Heart left ventricle (tissue), 16 donors: ENCODE measurements at regions of chr7 and their contacts with region 1.

Region 1: GRCh38 chr7:39085590-39086049 is 107.9 kb downstream of the POU6F2 start:
- DNase-seq: peak in 1 of 5 donors; percentile 29
- ATAC-seq: peak; percentile 51 to 92 (median 84)
- H3K4me3 ChIP-seq: peak overlapping the region in 10 of 12 donors; percentile 10 to 49 (median 40)
- H3K27ac ChIP-seq: peak overlapping the region in 4 of 12 donors; percentile 10 to 76 (median 62)
- H3K4me1 ChIP-seq: peaks cover 0 to 9% (median 0%) of the 10 kb centered on the region in 12 donors
- H3K27me3 ChIP-seq: peaks cover 0 to 20% (median 3%) of the 10 kb centered on the region in 9 donors
- CTCF ChIP-seq: no peak
- POLR2A ChIP-seq: no peak

Region 2: DNA sequence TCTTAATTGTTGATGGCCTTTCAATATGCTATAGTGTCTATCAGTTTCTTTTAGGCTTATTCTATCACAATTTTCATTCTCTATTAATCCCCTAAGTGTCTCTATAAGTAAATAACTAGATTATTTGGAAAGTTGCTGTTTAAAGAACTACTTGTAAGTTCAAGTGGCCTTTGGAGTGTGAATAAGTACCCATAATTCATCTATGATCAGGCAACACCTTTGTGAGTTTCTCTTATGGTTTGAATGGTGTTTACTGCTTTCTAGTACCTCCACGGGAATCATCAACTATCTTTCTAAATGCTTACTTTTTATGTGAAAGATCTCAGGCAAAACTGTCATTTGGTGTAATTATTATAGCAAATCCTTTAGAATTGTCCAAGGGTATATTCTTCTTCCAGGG is 58.8 kb after region 1 on chr7:
- intact Hi-C with region 1: no loop called
- DNase-seq: no peak
- ATAC-seq: no peak
- H3K4me3 ChIP-seq: no peak overlapping the region
- H3K27ac ChIP-seq: no peak overlapping the region
- H3K4me1 ChIP-seq: no peaks in the 10 kb centered on the region
- H3K27me3 ChIP-seq: no peaks in the 10 kb centered on the region
- CTCF ChIP-seq: no peak
- POLR2A ChIP-seq: no peak

Region 3: DNA sequence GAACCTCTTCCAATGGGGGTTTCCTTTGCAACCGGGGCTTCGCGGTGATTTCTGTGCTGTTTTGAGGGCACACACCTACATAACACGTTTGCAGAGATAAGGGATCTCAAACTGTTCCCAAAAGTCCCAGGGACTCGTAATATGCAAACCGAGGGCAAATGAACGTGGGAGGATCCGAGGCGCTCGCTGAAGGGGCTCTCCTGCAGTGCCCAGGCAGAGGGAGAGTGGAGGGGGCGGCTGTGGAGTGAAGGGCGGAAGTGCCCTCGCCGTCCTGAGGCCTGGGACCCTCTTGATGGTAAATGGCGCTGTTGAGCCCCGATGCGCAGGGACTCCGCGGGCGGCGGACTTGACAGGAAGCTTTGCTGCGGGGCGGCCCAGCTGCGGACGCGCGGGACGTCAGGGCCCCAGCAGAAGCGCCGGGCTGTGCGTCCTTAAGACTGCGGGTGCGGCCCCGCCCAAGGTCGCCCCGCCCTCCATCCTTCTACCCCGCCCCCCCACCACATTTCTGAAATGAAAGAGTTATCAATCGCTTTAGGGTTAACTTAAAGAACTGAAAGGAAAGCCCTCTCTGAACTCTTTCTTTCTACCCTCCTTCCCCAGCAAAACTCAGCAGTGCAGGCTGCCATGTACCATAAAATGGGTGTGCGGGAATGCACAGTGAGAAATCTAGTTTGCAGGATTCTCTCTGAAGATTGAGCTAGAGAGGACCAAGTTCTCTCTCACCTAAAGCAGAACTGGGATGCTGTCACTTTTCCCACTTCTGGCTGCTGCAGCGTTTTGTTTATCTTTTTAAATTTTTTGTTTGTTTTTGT is 328.8 kb after region 1 on chr7:
- intact Hi-C with region 1: loop called in 1 of 10 experiments (anchors 10 kb)
- DNase-seq: peak; percentile 18 to 67 (median 35)
- ATAC-seq: peak in 3 of 4 donors; percentile 65 to 88 (median 86)
- H3K4me3 ChIP-seq: peak overlapping the region; percentile 18 to 64 (median 56)
- H3K27ac ChIP-seq: peak overlapping the region in 2 of 12 donors; percentile 29 to 52
- H3K4me1 ChIP-seq: peaks cover 0 to 15% (median 1%) of the 10 kb centered on the region in 12 donors
- H3K27me3 ChIP-seq: peaks cover 0 to 20% (median 2%) of the 10 kb centered on the region in 9 donors
- CTCF ChIP-seq: peak in 1 of 12 donors; percentile 8
- POLR2A ChIP-seq: no peak

Region 4: GRCh38 chr7:39720574-39720973 is 635.0 kb after region 1 on chr7:
- intact Hi-C with region 1: no loop called
- DNase-seq: no peak
- ATAC-seq: no peak
- H3K4me3 ChIP-seq: no peak overlapping the region
- H3K27ac ChIP-seq: no peak overlapping the region
- H3K4me1 ChIP-seq: no peaks in the 10 kb centered on the region
- H3K27me3 ChIP-seq: no peaks in the 10 kb centered on the region
- CTCF ChIP-seq: no peak
- POLR2A ChIP-seq: no peak